ENCODE measurements at regions of chr5 and their contacts with region 1.

Region 1: GRCh38 chr5:79974891-79975290 is 16.2 kb downstream of the MTX3 start:
- DNase-seq: no peak
- ATAC-seq: no peak
- H3K4me3 Mint-ChIP-seq: no peak overlapping the region
- H3K27ac Mint-ChIP-seq: no peak overlapping the region
- H3K4me1 Mint-ChIP-seq: peaks cover 4% of the 10 kb centered on the region
- H3K27me3 Mint-ChIP-seq: no peaks in the 10 kb centered on the region

Region 2: GRCh38 chr5:79990598-79991507 is 16.0 kb after region 1 on chr5 and contains the start of gene MTX3:
- CTCF ChIA-PET with region 1: interaction called, 11 read pairs
- DNase-seq: peak; percentile 96
- ATAC-seq: peak; percentile 80
- H3K4me3 Mint-ChIP-seq: peak within 1 kb of the TSS; percentile 96
- H3K27ac Mint-ChIP-seq: peak within 1 kb of the TSS; percentile 98
- H3K4me1 Mint-ChIP-seq: peaks cover 53% of the 10 kb centered on the region
- H3K27me3 Mint-ChIP-seq: no peaks in the 10 kb centered on the region
- total RNA-seq, gene MTX3: 31.4 to 39.8 TPM